Activated naive CD4-positive, alpha-beta T cell treated with anti-CD3 and anti-CD28 coated beads, Interleukin-2, amount 10 ng/mL, durations not matched to agents 7 days and 5 days (primary cell): ENCODE measurements at regions of chr9 and their contacts with region 1.

Region 1: DNA sequence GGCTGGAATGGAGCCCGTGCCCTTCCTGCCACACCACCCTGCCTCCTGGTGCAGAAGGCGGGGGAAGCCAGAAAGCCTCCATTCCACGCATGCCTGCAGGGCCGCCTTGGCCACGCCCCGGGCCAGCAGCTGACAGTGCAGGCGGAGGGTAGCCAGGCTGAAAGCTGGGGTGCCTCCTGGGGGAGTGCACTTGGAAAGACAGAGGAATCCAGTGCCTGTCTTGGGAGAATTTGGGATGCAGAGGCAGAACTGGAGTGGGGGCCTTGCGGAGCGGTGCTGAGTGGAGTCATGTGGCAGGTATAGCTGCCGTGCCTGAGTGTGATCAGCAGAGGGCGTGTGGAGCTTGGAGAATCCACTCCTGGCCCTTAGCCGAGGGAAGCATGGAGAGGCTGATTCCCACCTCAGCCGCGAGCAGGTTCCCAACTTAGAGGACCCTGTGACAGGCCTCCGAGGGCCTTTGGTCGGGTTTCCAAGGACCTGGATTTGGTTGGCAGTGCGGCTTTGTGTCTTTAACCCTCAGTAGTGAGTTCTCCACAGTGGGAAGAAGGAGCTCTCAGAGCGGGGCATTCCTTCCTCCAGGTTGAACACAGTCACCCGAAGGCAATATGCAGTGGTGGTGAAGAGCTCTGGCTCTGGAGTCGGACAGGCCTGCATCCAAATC is 9.1 kb upstream of the URM1 start:
- DNase-seq: peak; percentile 81
- H3K4me3 Mint-ChIP-seq: peak overlapping the region; percentile 75
- H3K27ac Mint-ChIP-seq: peak overlapping the region; percentile 88
- H3K4me1 Mint-ChIP-seq: peaks cover 31% of the 10 kb centered on the region
- H3K27me3 Mint-ChIP-seq: peaks cover 4% of the 10 kb centered on the region

Region 2: DNA sequence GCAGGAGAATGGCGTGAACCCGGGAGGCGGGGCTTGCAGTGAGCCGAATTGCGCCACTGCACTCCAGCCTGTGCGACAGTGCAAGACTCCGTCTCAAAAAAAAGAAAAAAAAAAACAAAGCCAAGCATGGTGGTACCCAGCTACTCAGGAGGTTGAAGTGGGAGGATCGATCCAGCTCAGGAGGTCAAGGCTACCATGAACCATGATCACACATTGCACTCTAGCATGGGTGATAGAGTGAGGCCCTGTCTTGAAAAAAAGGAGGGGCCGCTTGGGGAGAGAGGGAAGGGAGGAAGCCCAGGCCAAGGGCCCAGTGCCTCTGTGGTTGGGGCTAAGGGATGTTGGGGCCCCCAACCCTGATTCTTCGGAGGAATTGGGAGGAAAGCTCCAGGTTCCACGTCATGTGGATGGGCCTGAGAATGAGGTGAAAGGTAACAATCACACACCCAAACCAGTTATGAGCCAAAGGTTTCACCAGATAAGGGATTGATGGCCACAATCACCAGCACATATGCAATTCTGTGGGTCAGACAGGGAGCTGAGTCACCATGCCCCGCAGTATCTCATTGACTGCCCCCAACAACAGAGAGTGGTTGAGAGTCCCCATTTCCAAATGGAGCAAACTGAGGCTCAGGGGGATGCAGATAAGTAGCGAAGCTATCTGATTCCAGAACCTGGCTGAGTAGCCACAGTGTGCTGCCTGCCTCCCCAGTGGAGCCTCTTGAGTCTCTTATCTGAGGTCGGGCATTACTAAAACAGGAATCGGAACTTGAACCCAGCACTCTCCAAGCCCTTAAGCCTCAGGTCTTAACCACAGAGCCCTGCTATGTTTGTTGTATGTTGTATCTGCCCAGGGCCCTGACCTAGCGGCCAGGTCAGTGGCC is 65.5 kb before region 1 on chr9:
- CTCF ChIA-PET with region 1: interaction called, 11 read pairs
- DNase-seq: no peak
- H3K4me3 Mint-ChIP-seq: no peak overlapping the region
- H3K27ac Mint-ChIP-seq: no peak overlapping the region
- H3K4me1 Mint-ChIP-seq: no peaks in the 10 kb centered on the region
- H3K27me3 Mint-ChIP-seq: no peaks in the 10 kb centered on the region

Region 3: DNA sequence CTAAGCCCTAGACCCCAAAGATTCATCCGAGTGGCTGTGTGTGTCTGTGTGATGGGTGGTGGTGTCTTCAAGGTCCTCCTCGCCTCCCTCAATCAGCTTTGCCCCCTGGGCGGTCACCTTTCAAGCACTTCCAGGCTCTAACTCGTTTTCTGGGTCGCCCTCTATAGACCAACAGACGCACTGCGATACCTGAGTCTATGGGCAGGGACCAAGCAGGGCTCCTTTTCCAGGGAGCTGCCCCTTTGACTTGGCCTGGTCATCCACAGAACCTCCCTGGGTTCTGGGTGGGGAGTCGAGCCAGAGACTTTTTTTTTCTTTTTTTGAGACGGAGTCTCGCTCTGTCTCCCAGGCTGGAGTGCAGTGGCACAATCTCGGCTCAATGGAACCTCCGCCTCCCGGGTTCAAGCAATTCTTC is 20.7 kb before region 1 on chr9:
- CTCF ChIA-PET with region 1: interaction called, 11 read pairs
- DNase-seq: peak; percentile 82
- H3K4me3 Mint-ChIP-seq: peak overlapping the region; percentile 89
- H3K27ac Mint-ChIP-seq: peak overlapping the region; percentile 87
- H3K4me1 Mint-ChIP-seq: peaks cover 11% of the 10 kb centered on the region
- H3K27me3 Mint-ChIP-seq: no peaks in the 10 kb centered on the region

Region 4: GRCh38 chr9:128349772-128350171 is 12.3 kb before region 1 on chr9:
- CTCF ChIA-PET with region 1: interaction called, 15 read pairs
- DNase-seq: no peak
- H3K4me3 Mint-ChIP-seq: no peak overlapping the region
- H3K27ac Mint-ChIP-seq: peak overlapping the region; percentile 14
- H3K4me1 Mint-ChIP-seq: no peaks in the 10 kb centered on the region
- H3K27me3 Mint-ChIP-seq: no peaks in the 10 kb centered on the region

Region 5: GRCh38 chr9:128412120-128412790 is 50.1 kb after region 1 on chr9:
- CTCF ChIA-PET with region 1: interaction called, 61 read pairs
- DNase-seq: peak; percentile 77
- H3K4me3 Mint-ChIP-seq: no peak overlapping the region
- H3K27ac Mint-ChIP-seq: no peak overlapping the region
- H3K4me1 Mint-ChIP-seq: peaks cover 4% of the 10 kb centered on the region
- H3K27me3 Mint-ChIP-seq: peaks cover 84% of the 10 kb centered on the region

Region 6: DNA sequence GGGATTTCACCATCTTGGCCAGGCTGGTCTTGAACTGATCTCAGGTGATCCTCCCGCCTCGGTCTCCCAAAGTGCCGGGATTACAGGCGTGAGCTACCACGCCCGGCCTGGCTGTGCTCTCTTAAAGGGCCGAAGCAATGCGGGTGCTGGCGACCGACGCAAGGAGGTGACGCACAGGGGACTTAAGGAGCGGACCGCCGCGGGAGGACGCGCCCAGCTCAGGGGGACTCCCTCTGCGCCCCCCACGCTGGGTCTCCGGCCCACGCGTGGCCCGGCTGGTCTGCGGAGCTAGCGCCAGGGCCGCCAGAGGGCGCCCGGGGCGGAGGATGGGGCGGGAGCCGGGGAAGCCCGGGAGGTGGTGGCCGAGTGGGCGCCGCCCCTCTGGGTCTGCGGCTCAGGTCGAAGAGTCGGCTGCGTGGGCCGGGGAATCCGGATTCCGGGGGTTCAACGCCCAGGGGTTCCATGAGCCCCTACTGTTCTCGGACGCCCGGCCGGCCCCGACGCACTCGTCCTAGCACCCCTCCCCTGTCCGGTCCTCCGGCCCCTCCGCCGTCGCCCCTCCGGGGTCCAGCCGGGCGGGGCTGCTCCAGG is 58.0 kb after region 1 on chr9:
- CTCF ChIA-PET with region 1: interaction called, 13 read pairs
- DNase-seq: peak; percentile 74
- H3K4me3 Mint-ChIP-seq: peak overlapping the region; percentile 70
- H3K27ac Mint-ChIP-seq: no peak overlapping the region
- H3K4me1 Mint-ChIP-seq: peaks cover 17% of the 10 kb centered on the region
- H3K27me3 Mint-ChIP-seq: peaks cover 92% of the 10 kb centered on the region

Region 7: DNA sequence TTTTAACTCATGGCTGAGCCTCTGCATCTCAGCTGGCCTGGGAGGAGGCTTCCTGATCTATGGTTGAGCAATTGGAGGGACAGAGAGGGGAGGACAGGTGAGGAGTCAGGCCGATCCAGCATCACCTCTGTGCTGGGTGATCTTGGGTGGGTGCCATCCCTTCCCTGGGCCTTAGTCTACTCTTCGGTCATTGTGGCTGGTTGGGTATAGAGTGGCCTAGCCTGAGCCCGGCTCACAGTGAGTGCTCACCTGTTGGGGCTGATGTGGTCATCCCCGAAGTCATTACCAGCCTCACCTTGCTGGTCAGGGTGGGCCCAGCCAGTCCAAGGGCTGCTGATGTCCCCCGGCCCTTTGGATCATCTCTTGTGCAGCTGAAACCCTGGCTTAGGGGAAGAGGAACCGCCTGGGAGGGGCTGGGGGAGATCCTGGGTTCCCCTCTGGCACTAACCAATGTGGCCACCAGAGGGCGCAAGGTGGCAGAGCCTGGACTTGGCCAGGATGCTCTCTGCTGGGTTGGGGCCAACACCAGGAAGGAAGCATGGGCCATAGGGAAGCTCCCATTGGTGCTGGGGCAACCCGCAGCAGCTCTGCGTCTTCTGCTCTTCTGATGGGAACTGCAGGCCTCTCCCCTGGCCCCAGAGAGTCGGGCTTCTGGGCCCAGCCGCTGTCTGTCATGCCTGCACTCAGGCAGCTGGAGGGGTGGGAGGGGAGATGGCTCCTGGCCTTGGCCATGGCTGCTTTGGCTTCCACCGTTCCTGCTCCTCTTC is 76.4 kb after region 1 on chr9:
- CTCF ChIA-PET with region 1: interaction called, 13 read pairs
- DNase-seq: peak; percentile 90
- H3K4me3 Mint-ChIP-seq: no peak overlapping the region
- H3K27ac Mint-ChIP-seq: no peak overlapping the region
- H3K4me1 Mint-ChIP-seq: peaks cover 4% of the 10 kb centered on the region
- H3K27me3 Mint-ChIP-seq: no peaks in the 10 kb centered on the region